Calu3 (cell line): ENCODE measurements at regions of chr10 and their contacts with region 1.

Region 1: DNA sequence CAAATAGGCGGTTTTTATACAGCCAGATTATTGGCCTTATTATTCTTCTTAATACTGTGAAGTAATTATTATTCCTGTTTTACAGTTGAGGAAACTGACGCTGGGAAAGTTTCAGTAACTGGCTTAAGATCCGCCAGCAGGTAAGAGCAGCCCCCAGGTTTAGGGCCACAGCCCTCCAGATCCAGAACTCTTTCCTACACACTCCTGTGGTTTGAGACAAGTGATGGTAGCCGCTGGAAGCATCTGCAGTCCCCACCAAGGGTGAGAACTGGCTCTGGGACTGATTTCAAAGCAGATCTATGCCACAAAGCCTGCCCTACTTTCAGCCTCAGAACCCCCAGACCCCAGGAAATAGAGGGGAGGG is 3.0 kb upstream of the UNC5B start:
- DNase-seq: no peak
- H3K4me3 Mint-ChIP-seq: no peak overlapping the region
- H3K27ac Mint-ChIP-seq: no peak overlapping the region
- H3K4me1 Mint-ChIP-seq: no peaks in the 10 kb centered on the region
- H3K27me3 Mint-ChIP-seq: peaks cover 91% of the 10 kb centered on the region
- CTCF ChIP-seq: peak; percentile 18

Region 2: DNA sequence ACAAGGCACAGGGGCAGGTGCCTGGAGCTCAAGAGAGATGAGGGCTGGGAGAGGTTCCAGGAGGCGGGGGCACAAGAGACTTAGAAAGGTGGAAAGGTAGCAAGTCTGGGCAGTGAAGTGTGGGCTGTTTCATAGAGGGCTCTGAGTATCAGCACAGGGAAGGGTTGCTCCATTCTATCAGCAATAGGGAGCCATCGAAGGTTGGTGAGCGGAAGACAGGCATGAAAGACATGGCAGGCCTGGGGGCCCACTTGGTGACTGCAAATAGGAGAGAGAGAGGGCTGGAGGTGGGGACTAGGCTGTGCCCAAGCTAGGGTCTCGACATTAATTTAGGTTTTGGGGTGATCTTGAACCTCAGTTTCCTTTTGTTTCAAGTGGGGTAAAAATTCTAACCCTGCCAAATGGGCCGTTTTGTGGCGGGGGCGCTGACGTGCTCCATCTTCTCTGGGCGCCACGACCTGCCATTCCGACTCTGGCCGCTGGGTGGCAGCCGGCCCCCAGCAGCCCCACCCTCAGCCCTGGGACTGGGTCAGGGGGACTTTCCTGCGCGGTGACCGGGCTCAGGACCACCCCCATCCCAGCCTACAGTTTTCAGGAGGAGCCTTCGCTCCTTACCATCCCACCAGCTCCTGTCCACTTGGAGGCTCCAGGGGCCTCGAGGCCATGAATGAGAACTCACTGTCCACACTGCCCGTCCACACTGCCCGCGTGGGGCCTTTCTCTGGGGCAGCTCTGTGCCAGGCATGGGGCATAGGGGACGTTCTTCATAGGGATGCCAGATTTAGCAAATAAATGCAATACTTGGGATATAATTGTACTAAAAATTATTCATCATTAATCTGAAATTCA is 283.7 kb before region 1 on chr10:
- CTCF ChIA-PET with region 1: no interaction called
- intact Hi-C with region 1: loop called (anchors 2 kb)
- DNase-seq: peak; percentile 69
- H3K4me3 Mint-ChIP-seq: no peak overlapping the region
- H3K27ac Mint-ChIP-seq: no peak overlapping the region
- H3K4me1 Mint-ChIP-seq: no peaks in the 10 kb centered on the region
- H3K27me3 Mint-ChIP-seq: peaks cover 91% of the 10 kb centered on the region
- CTCF ChIP-seq: peak; percentile 99

Region 3: GRCh38 chr10:70982443-70982842 is 226.9 kb before region 1 on chr10:
- CTCF ChIA-PET with region 1: no interaction called
- intact Hi-C with region 1: no loop called
- DNase-seq: no peak
- H3K4me3 Mint-ChIP-seq: no peak overlapping the region
- H3K27ac Mint-ChIP-seq: no peak overlapping the region
- H3K4me1 Mint-ChIP-seq: no peaks in the 10 kb centered on the region
- H3K27me3 Mint-ChIP-seq: peaks cover 84% of the 10 kb centered on the region
- CTCF ChIP-seq: no peak

Region 4: DNA sequence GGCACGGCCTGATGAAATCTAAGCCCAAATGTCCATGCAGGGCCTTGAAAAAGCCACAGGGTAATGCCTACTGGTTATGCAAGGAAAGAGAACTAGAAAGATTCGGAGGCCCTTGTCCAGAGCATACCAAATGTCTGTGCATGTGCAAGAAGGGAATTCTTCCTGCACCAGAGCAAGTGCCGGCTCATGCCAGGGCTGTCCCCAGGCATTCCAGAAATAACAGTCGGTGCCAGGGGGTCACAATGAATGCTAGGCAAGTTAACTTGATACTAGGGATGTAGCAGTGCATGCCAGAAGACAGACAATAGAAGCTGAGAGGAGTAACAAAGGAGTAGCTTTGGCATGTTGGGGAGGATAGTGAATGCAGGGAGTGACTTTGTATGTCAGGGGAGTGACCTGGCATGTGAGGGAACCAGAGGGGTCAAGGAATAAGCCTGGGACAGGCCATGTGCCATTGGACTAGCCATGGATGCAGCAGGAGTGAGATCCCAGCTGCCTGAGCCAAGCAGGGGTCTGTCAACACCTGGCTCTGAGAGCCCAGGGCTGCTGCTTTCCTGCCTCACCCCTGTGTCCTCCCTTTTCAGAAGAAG is 116.4 kb before region 1 on chr10:
- CTCF ChIA-PET with region 1: no interaction called
- intact Hi-C with region 1: loop called (anchors 10 kb)
- DNase-seq: no peak
- H3K4me3 Mint-ChIP-seq: no peak overlapping the region
- H3K27ac Mint-ChIP-seq: no peak overlapping the region
- H3K4me1 Mint-ChIP-seq: no peaks in the 10 kb centered on the region
- H3K27me3 Mint-ChIP-seq: peaks cover 9% of the 10 kb centered on the region
- CTCF ChIP-seq: no peak

Region 5: GRCh38 chr10:71351628-71352319 is 142.4 kb after region 1 on chr10:
- CTCF ChIA-PET with region 1: no interaction called
- intact Hi-C with region 1: no loop called
- DNase-seq: no peak
- H3K4me3 Mint-ChIP-seq: no peak overlapping the region
- H3K27ac Mint-ChIP-seq: no peak overlapping the region
- H3K4me1 Mint-ChIP-seq: peaks cover 29% of the 10 kb centered on the region
- H3K27me3 Mint-ChIP-seq: peaks cover 32% of the 10 kb centered on the region
- CTCF ChIP-seq: no peak